Mammary epithelial cell (primary cell): ENCODE measurements at regions of chr3 and their contacts with region 1.

Region 1: DNA sequence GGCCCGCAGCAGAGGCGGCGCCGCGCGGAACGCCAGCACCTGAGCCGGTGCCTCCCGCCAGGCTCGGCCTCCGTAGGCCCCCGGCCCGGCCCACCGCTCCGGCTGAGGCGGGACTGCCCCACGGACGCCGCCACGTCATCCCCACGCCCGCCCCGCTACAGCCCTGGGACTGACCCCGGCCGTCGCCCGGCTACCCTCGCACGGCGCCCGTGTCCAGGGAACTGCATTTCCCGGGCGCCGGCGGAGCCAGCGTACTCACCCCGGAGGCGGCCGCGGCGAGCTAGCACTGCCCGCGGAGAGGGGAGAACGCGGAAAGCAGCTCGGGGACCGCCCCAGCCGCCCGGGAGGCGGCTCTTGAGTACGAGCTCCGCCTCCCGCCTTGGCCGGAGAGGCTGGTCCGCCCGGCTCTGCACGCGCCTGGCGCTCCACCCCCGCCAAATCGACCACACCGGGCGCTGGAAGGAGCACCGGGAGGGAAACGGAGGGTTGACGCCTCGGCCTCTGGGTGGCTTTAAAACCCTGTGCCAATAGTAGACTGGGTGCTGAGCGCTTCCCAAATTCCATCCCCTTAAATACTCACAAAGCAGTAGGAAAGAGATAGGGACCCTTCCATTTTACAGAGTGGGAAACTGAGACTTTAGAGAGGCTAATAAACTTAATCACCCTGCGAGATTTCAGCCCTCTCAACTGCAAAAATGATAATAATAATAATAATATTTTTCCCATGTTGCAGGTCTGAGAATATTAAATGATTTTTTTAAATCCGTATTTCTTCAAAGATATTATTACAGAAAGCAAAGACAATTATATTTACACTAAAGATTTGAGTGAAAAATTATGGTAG is at the start of gene B4GALT4:
- DNase-seq: peak; percentile 88
- H3K4me3 ChIP-seq: peak within 1 kb of the TSS; percentile 51 to 82 (median 73)
- H3K27ac ChIP-seq: peak within 1 kb of the TSS; percentile 72
- H3K4me1 ChIP-seq: peaks cover 9% of the 10 kb centered on the region
- H3K27me3 ChIP-seq: no peaks in the 10 kb centered on the region
- CTCF ChIP-seq: no peak
- total RNA-seq, gene B4GALT4: 18.3 to 34.8 TPM

Region 2: DNA sequence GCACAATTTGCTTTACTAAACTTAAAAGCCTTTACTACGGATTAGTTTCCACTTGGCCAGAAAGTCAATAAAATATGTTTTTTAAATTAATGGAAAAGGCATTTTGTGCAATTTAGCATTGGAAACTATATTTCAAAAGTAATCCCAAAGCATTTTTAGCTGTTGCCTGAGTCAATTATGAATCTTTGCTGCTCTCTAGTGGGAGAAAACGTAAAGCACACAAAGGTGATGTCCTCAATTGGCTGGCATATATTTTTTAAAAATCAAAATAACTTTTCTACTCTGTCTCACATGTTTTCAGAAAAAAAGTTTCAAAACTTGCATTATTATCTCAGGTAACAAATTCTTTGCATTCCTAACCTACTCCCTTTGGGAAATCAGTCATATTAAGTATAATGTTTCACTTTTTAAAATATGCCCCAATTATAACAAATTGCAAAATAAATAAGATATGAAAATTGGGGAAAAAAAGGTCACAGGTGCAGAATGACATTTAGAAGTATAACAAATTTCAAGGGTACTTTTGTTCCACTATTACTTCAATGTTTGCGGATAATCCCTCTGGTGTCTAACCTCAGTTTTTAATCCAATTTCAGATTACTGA is 142.1 kb before region 1 on chr3:
- CTCF ChIA-PET with region 1: no interaction called
- dilution Hi-C with region 1: no loop called
- in situ Hi-C with region 1: no loop called
- intact Hi-C with region 1: loop called (anchors 1 kb)
- DNase-seq: peak; percentile 23
- H3K4me3 ChIP-seq: no peak overlapping the region
- H3K27ac ChIP-seq: no peak overlapping the region
- H3K4me1 ChIP-seq: no peaks in the 10 kb centered on the region
- H3K27me3 ChIP-seq: no peaks in the 10 kb centered on the region
- CTCF ChIP-seq: peak; percentile 72 to 78

Region 3: DNA sequence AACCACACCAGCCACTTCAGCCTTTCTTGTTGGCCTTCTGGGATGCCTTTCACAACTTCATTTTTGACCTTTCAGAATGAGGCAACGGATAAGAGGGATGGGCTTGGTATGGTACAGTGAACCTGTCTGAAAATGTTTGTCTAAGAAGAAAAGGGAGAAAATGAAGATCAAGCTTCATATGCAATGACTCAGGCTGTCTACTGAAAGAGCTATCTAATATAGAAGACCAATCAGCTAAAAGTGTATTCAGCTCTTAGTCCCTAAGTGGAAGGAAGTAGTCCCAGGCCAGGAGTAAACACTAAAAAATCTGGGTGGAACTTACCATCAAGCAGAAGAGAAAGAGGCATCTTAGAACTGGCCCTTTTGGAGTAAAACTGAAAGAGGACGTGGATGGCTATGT is 79.6 kb before region 1 on chr3:
- CTCF ChIA-PET with region 1: no interaction called
- dilution Hi-C with region 1: loop called (anchors 5 kb)
- in situ Hi-C with region 1: no loop called
- intact Hi-C with region 1: no loop called
- DNase-seq: no peak
- H3K4me3 ChIP-seq: no peak overlapping the region
- H3K27ac ChIP-seq: no peak overlapping the region
- H3K4me1 ChIP-seq: peaks cover 11% of the 10 kb centered on the region
- H3K27me3 ChIP-seq: no peaks in the 10 kb centered on the region
- CTCF ChIP-seq: no peak

Region 4: GRCh38 chr3:119206611-119207511 is 34.0 kb before region 1 on chr3:
- CTCF ChIA-PET with region 1: no interaction called
- dilution Hi-C with region 1: no loop called
- in situ Hi-C with region 1: no loop called
- intact Hi-C with region 1: loop called (anchors 2 kb)
- DNase-seq: peak; percentile 61
- H3K4me3 ChIP-seq: no peak overlapping the region
- H3K27ac ChIP-seq: peak overlapping the region; percentile 3
- H3K4me1 ChIP-seq: peaks cover 18% of the 10 kb centered on the region
- H3K27me3 ChIP-seq: no peaks in the 10 kb centered on the region
- CTCF ChIP-seq: peak in 1 of 2 donors; percentile 41

Region 5: DNA sequence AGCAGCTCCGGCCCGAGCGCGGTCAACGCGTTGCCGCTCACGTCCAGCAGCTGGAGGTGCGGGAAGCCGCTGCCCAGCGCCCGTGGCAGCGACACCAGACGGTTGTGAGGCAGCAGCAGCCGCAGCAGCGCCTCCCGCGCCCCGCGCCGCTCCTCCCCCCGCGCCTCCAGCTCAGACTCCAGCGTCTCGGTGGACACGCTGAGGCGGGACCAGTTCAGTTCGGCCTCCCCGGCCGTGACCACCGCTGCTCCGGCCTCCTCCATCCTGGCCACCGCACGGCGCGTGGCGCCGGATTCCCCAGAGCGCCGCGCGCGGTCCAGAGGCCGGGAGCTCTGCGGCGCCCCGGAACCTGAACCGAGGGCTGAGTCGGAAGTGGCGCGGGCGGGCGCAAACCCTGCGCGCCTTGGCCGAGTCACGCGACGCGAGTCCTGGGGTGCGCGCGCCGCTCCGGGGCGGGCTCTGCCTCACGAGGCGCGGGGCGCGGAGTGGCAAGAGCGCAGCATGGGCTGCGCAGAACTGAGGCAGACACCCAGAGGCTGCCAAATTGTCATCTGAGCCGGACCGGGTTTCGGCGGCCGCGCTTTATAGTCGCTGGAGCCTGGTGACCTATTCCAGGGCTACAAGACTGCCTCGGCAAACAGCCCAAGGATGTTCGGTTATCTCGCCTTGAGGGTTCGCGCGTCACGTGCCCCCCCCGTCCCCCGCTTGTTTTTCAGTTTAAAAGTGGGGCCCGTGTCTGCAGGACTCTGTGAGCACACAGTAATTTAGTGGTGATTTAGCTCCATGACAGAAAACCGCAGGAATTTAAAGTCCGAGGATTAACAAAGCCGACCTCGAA is 1108.4 kb after region 1 on chr3 and contains the start of gene LRRC58:
- CTCF ChIA-PET with region 1: no interaction called
- dilution Hi-C with region 1: no loop called
- in situ Hi-C with region 1: no loop called
- intact Hi-C with region 1: loop called (anchors 5 kb)
- DNase-seq: peak; percentile 95
- H3K4me3 ChIP-seq: peak within 1 kb of the TSS; percentile 85 to 95 (median 85)
- H3K27ac ChIP-seq: peak within 1 kb of the TSS; percentile 76
- H3K4me1 ChIP-seq: peaks cover 8% of the 10 kb centered on the region
- H3K27me3 ChIP-seq: no peaks in the 10 kb centered on the region
- CTCF ChIP-seq: peak in 1 of 2 donors; percentile 40
- total RNA-seq, gene LRRC58: 21.3 to 28.2 TPM